Naive thymus-derived CD4-positive, alpha-beta T cell (primary cell): ENCODE measurements at regions of chr17 and their contacts with region 1.

Region 1: DNA sequence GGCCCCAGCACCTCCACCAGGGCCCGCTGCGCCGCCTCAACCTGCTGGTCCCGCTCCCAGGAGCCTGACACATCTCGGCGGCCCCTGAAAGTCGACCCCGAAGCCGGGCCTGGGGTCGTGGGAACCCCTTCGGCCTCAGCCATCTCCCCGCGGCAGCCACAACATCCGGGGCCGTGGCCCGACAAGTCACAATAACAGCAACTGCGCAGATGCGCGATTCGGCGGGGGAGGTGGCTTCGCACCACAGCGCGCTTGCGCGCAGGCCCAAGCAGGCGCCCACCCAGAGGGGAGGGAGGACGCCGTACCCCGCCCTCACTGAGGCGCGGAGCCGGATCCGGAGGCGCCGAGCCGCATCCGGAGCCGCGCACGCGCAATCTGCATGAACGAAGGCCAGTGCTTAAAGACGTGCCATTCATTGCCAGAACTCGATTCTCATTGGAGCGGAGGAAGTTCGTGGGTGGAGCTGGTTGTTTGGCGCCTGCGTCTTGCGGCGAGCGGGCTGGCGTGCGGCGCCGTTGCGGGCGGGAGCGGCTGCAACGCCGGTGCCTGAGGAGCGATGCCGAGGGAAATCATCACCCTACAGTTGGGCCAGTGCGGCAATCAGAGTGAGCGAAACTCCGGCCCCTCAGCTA is at the starts of genes RETREG3 and TUBG1:
- DNase-seq: peak; percentile 97 to 100 (median 100)
- ATAC-seq: peak; percentile 95
- H3K4me3 ChIP-seq: peak within 1 kb of the TSS; percentile 85
- H3K4me3 Mint-ChIP-seq: peak within 1 kb of the TSS; percentile 95 to 100 (median 100)
- H3K27ac ChIP-seq: peak within 1 kb of the TSS; percentile 89
- H3K27ac Mint-ChIP-seq: peak within 1 kb of the TSS; percentile 94 to 100 (median 97)
- H3K4me1 ChIP-seq: peaks cover 30 to 37% of the 10 kb centered on the region in 2 donors
- H3K4me1 Mint-ChIP-seq: peaks cover 38 to 55% (median 41%) of the 10 kb centered on the region in 7 donors
- H3K27me3 ChIP-seq: no peaks in the 10 kb centered on the region
- H3K27me3 Mint-ChIP-seq: peaks cover 0 to 2% (median 0%) of the 10 kb centered on the region in 5 donors
- total RNA-seq, gene RETREG3: 53.3 to 132 (median 75.7) TPM
- total RNA-seq, gene TUBG1: 7.8 to 54.4 (median 12.5) TPM

Region 2: GRCh38 chr17:42287926-42288802 is 321.1 kb before region 1 on chr17 and contains the start of gene STAT5A:
- CTCF ChIA-PET with region 1: no interaction called
- POLR2A ChIA-PET with region 1: no interaction called
- intact Hi-C with region 1: loop called in 1 of 2 experiments (anchors 5 kb)
- DNase-seq: peak; percentile 58 to 83 (median 79)
- ATAC-seq: peak; percentile 90
- H3K4me3 ChIP-seq: peak within 1 kb of the TSS; percentile 88
- H3K4me3 Mint-ChIP-seq: peak within 1 kb of the TSS; percentile 87 to 97 (median 93)
- H3K27ac ChIP-seq: peak within 1 kb of the TSS; percentile 93
- H3K27ac Mint-ChIP-seq: peak within 1 kb of the TSS; percentile 93 to 99 (median 96)
- H3K4me1 ChIP-seq: peaks cover 18 to 24% of the 10 kb centered on the region in 2 donors
- H3K4me1 Mint-ChIP-seq: peaks cover 27 to 65% (median 54%) of the 10 kb centered on the region in 7 donors
- H3K27me3 ChIP-seq: no peaks in the 10 kb centered on the region
- H3K27me3 Mint-ChIP-seq: no peaks in the 10 kb centered on the region
- total RNA-seq, gene STAT5A: 111 to 162 (median 150) TPM

Region 3: GRCh38 chr17:42378597-42379594 is 230.4 kb before region 1 on chr17:
- CTCF ChIA-PET with region 1: no interaction called
- POLR2A ChIA-PET with region 1: no interaction called
- intact Hi-C with region 1: no loop called
- DNase-seq: peak in 1 of 9 donors; percentile 27
- ATAC-seq: peak; percentile 55
- H3K4me3 ChIP-seq: peak overlapping the region; percentile 34
- H3K4me3 Mint-ChIP-seq: peak overlapping the region; percentile 69 to 90 (median 82)
- H3K27ac ChIP-seq: peak overlapping the region; percentile 58
- H3K27ac Mint-ChIP-seq: peak overlapping the region; percentile 63 to 89 (median 86)
- H3K4me1 ChIP-seq: peaks cover 16 to 21% of the 10 kb centered on the region in 2 donors
- H3K4me1 Mint-ChIP-seq: peaks cover 42 to 82% (median 73%) of the 10 kb centered on the region in 7 donors
- H3K27me3 ChIP-seq: no peaks in the 10 kb centered on the region
- H3K27me3 Mint-ChIP-seq: no peaks in the 10 kb centered on the region

Region 4: DNA sequence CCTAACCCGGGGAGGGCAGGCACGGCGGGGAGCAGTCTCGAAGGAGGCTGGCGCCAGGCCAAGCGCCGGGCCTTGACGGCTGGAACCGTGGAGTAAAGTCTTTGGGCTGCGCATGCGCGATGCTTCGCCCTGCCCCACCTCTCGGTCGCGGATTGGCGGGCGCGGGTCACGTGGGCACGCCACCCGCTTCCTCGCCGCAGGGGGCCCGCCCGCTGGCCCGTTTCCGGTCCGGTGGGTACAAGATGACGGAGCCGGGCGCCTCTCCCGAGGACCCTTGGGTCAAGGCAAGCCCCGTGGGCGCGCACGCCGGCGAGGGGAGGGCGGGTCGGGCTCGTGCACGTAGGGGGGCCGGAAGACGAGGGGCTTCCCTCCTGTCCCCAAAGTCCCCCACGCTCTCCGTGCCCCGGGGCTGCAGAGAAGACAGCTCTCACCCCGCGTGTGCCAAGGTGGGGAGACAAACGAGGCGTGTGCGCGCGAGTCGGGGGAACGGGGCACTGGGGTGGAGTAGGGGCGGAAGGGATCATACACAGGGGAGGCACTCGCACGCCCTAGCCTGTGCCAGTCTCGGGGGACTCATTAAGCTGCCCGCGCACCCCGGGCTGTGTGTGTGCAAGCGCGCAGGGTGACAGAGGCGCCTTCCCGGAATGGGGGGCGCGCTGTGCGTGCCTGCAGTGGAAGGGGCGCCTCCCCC is 42.3 kb before region 1 on chr17 and contains the start of gene MLX:
- CTCF ChIA-PET with region 1: interaction called, 3 read pairs
- POLR2A ChIA-PET with region 1: interaction called, 9 read pairs
- intact Hi-C with region 1: loop called (anchors 2 kb)
- DNase-seq: peak; percentile 86 to 96 (median 90)
- ATAC-seq: peak; percentile 80
- H3K4me3 ChIP-seq: peak within 1 kb of the TSS; percentile 76
- H3K4me3 Mint-ChIP-seq: peak within 1 kb of the TSS; percentile 80 to 98 (median 95)
- H3K27ac ChIP-seq: peak within 1 kb of the TSS; percentile 92
- H3K27ac Mint-ChIP-seq: peak within 1 kb of the TSS; percentile 87 to 98 (median 95)
- H3K4me1 ChIP-seq: peaks cover 26 to 27% of the 10 kb centered on the region in 2 donors
- H3K4me1 Mint-ChIP-seq: peaks cover 26 to 57% (median 45%) of the 10 kb centered on the region in 7 donors
- H3K27me3 ChIP-seq: no peaks in the 10 kb centered on the region
- H3K27me3 Mint-ChIP-seq: no peaks in the 10 kb centered on the region
- total RNA-seq, gene MLX: 35.3 to 73.9 (median 65.1) TPM

Region 5: DNA sequence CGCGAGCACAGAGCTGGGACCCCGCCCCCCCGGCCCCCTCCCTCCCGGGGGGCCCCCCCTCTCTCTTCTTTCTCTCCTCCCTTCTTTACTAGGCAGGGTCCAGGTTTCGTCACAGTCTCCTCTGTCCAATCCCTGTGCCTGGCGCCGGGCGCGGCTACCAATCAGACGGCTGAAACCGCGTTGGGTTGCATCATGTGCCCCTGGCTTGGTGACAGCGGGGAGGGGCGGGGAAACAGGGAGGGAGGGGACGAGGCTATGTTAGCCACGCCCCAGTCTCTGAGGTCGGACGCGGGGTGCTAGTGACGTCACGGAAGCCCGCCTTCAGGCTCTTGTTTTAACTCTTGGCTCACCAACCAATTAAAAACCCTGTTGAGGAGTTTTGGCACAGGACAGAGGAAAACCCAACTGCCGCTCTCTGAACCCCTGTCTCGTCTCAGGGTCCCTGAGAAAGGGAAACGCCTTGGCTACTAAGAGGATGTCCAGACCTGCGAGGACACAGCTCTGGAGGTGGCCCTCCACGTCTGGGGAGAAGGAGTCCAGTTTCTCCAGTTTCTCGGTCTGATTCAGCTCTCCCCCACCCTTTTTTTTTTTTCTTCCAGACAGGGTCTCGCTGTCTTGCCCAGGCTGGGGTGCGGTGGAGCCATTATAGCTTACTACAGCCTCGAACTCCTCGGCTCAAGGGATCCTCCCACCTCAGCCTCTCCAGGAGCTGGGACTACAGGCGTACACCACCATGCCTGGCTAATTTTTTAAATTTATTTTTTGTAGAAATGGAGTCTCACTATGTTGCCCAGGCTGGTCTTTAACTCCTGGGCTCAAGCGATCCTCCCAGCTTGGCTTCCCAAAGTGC is 67.9 kb after region 1 on chr17:
- CTCF ChIA-PET with region 1: interaction called, 4 read pairs
- POLR2A ChIA-PET with region 1: interaction called, 17 read pairs
- intact Hi-C with region 1: loop called (anchors 1 kb)
- DNase-seq: peak; percentile 80 to 98 (median 92)
- ATAC-seq: peak; percentile 90
- H3K4me3 ChIP-seq: peak overlapping the region; percentile 73
- H3K4me3 Mint-ChIP-seq: peak overlapping the region; percentile 79 to 94 (median 90)
- H3K27ac ChIP-seq: peak overlapping the region; percentile 64
- H3K27ac Mint-ChIP-seq: peak overlapping the region in 8 of 9 donors; percentile 7 to 91 (median 82)
- H3K4me1 ChIP-seq: peaks cover 47 to 57% of the 10 kb centered on the region in 2 donors
- H3K4me1 Mint-ChIP-seq: peaks cover 21 to 60% (median 50%) of the 10 kb centered on the region in 7 donors
- H3K27me3 ChIP-seq: peaks cover 5 to 21% of the 10 kb centered on the region in 2 donors
- H3K27me3 Mint-ChIP-seq: peaks cover 26 to 49% (median 36%) of the 10 kb centered on the region in 5 donors

Region 6: DNA sequence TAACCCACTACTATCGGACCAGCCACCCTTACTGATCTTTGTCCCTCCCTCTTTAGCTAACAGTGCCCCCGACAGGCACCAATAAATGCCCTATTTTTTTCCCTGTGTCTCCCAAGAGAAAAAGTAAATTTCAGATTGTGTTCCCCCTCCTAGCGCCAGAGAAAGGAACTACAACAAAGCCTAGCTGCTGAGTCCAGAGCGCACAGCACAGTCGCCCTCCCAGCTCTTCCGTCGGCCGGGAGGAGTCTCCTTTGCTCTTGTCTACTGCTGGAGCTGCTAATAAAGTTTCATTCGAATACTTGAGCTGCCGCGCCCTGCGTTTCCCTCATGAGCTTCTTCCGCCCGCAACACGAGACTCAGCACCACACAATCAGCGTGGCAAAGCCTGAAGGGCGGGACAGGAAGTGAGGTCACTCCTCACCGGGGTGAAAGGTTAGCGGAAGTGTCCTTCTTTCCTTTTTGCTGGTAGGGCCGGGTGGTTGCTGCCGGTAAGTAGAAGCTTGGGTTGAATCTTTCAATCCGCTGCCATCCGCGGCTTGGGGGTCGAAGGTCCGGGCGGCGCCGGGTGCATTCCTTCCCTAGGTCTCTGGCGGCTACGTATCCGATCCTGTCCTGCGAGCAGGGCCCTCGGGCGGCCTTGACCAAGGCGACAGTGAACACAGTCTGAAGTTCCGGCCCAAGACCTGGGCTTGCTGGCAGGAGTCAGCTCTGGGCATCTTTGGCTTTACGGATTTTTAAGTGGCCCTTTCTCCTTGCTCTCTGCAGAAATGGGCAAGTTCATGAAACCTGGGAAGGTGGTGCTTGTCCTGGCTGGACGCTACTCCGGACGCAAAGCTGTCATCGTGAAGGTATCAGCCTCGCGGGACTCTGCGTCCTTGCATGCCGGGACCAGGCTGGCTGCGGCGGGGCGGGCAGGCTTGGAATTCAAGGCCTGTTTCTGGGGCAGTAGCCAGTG is 389.0 kb after region 1 on chr17 and contains the start of gene RPL27:
- CTCF ChIA-PET with region 1: no interaction called
- POLR2A ChIA-PET with region 1: interaction called, 3 read pairs
- intact Hi-C with region 1: loop called in 1 of 2 experiments (anchors 2 kb)
- DNase-seq: peak; percentile 89 to 99 (median 98)
- ATAC-seq: peak; percentile 97
- H3K4me3 ChIP-seq: peak within 1 kb of the TSS; percentile 91
- H3K4me3 Mint-ChIP-seq: peak within 1 kb of the TSS; percentile 74 to 98 (median 95)
- H3K27ac ChIP-seq: peak within 1 kb of the TSS; percentile 97
- H3K27ac Mint-ChIP-seq: peak within 1 kb of the TSS; percentile 89 to 100 (median 99)
- H3K4me1 ChIP-seq: peaks cover 15 to 18% of the 10 kb centered on the region in 2 donors
- H3K4me1 Mint-ChIP-seq: peaks cover 16 to 29% (median 24%) of the 10 kb centered on the region in 7 donors
- H3K27me3 ChIP-seq: no peaks in the 10 kb centered on the region
- H3K27me3 Mint-ChIP-seq: no peaks in the 10 kb centered on the region
- total RNA-seq, gene RPL27: 951 to 1,861 (median 1,662) TPM

Region 7: GRCh38 chr17:44123356-44124117 is 1514.2 kb after region 1 on chr17 and contains the start of gene HDAC5:
- CTCF ChIA-PET with region 1: no interaction called
- POLR2A ChIA-PET with region 1: no interaction called
- intact Hi-C with region 1: loop called in 1 of 2 experiments (anchors 5 kb)
- DNase-seq: peak; percentile 88 to 95 (median 95)
- ATAC-seq: peak; percentile 98
- H3K4me3 ChIP-seq: peak within 1 kb of the TSS; percentile 95
- H3K4me3 Mint-ChIP-seq: peak within 1 kb of the TSS; percentile 92 to 99 (median 98)
- H3K27ac ChIP-seq: peak within 1 kb of the TSS; percentile 90
- H3K27ac Mint-ChIP-seq: peak within 1 kb of the TSS; percentile 84 to 99 (median 96)
- H3K4me1 ChIP-seq: peaks cover 14 to 21% of the 10 kb centered on the region in 2 donors
- H3K4me1 Mint-ChIP-seq: peaks cover 21 to 53% (median 46%) of the 10 kb centered on the region in 7 donors
- H3K27me3 ChIP-seq: no peaks in the 10 kb centered on the region
- H3K27me3 Mint-ChIP-seq: peaks cover 0 to 9% (median 0%) of the 10 kb centered on the region in 5 donors
- total RNA-seq, gene HDAC5: 15.2 to 106 (median 70.9) TPM